ENCODE measurements at regions of chr2 and their contacts with region 1.

Region 1: GRCh38 chr2:161312996-161313395 is 4.8 kb downstream of the PSMD14 start:
- DNase-seq: no peak
- ATAC-seq: no peak
- H3K4me3 ChIP-seq: no peak overlapping the region
- H3K4me1 ChIP-seq: peaks cover 10% of the 10 kb centered on the region
- CTCF ChIP-seq: no peak

Region 2: DNA sequence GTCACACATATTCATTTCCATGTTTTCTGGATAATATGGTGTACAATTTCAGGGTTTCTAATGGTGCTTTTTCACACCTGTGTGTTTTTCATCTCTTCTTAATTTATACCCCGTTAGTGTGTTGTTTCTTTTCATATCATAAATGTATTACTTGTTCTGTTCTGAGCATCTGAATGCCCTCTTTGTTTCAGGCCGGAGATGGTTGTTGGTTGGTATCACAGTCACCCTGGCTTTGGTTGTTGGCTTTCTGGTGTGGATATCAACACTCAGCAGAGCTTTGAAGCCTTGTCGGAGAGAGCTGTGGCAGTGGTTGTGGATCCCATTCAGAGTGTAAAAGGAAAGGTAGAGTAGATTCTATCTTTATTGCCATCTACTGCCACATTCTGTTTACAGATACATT is 58.0 kb after region 1 on chr2:
- intact Hi-C with region 1: loop called in 1 of 2 experiments (anchors 2 kb)
- DNase-seq: no peak
- ATAC-seq: no peak
- H3K4me3 ChIP-seq: no peak overlapping the region
- H3K4me1 ChIP-seq: no peaks in the 10 kb centered on the region
- CTCF ChIP-seq: no peak

Region 3: DNA sequence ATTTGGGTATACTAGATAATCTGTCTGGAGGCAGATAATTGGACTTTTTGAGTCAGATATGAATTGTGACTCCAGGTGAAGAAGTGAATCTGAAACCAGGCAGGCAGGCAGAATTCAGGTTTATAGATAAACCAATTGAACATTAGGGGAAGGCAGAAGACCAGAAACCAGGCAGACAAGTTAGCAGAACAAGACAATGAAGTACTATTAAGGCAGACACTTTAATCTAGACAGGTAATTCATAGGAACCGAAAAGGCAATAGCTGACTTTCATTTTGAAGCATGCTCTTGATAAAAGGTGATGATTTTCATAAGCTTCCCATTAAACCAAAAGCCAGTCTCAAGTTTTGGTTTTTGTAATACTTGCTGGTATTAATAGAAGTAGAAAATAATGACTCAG is 291.9 kb after region 1 on chr2:
- intact Hi-C with region 1: no loop called
- DNase-seq: no peak
- ATAC-seq: no peak
- H3K4me3 ChIP-seq: no peak overlapping the region
- H3K4me1 ChIP-seq: no peaks in the 10 kb centered on the region
- CTCF ChIP-seq: no peak